ENCODE measurements at regions of chr11 and their contacts with region 1.

Region 1: DNA sequence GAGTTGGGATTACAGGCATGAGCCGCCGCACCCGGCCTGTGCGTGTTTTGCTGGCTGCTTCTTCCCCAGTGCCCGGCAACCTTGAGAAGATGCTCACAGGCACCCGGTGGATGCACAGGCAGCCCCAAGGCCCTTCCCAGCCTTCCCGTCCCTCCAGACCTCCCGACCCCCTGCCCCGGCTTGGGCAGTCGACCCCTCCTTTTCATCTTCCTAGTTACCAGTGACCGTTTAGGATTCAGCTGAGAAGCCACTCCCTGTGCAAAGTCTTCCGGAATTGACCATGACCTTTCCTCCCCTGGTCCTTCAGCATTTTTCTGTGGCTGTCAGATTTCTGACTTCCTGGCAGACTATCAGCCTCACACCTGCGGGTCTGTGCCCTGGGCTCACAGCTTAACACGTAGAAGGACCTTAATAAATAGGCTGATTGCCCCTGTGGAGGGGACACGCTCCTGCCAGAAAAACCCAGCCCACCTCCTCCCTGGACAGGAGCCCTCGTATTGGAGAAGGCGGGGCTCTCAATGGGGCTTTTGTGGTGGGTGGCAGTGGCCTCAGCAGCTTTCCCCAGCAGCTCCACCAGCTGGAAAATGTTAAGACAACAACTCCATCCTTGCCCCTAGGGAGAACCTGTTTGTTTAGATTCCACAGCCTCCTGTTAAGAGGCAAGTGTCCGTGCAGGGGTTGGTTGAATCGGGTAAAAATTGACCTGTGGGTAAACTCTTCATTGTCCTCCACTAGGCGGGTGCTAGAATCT is 10.4 kb upstream of the ANO1 start:
- DNase-seq: peak; percentile 81 to 98
- H3K4me3 ChIP-seq: peak overlapping the region; percentile 50
- H3K27ac ChIP-seq: peak overlapping the region; percentile 86
- H3K4me1 ChIP-seq: peaks cover 91% of the 10 kb centered on the region
- H3K27me3 ChIP-seq: no peaks in the 10 kb centered on the region
- CTCF ChIP-seq: peak; percentile 48; the same call in 1 of the 2 replicates

Region 2: GRCh38 chr11:70048279-70049027 is 19.3 kb before region 1 on chr11:
- CTCF ChIA-PET with region 1: no interaction called
- POLR2A ChIA-PET with region 1: no interaction called
- intact Hi-C with region 1: loop called (anchors 1 kb)
- DNase-seq: peak; percentile 84 to 95
- H3K4me3 ChIP-seq: 0 out of 2 replicates have a peak overlapping the region, but pooled peaks have one; percentile 5
- H3K27ac ChIP-seq: peak overlapping the region; percentile 57
- H3K4me1 ChIP-seq: peaks cover 23% of the 10 kb centered on the region
- H3K27me3 ChIP-seq: no peaks in the 10 kb centered on the region
- CTCF ChIP-seq: peak; percentile 76

Region 3: GRCh38 chr11:70082829-70083228 is 15.1 kb after region 1 on chr11:
- CTCF ChIA-PET with region 1: no interaction called
- POLR2A ChIA-PET with region 1: no interaction called
- intact Hi-C with region 1: loop called (anchors 2 kb)
- DNase-seq: no peak
- H3K4me3 ChIP-seq: no peak overlapping the region
- H3K27ac ChIP-seq: peak overlapping the region; percentile 31
- H3K4me1 ChIP-seq: peaks cover 56% of the 10 kb centered on the region
- H3K27me3 ChIP-seq: no peaks in the 10 kb centered on the region
- CTCF ChIP-seq: peak; percentile 44

Region 4: GRCh38 chr11:70128435-70128906 is 60.7 kb after region 1 on chr11:
- CTCF ChIA-PET with region 1: no interaction called
- POLR2A ChIA-PET with region 1: no interaction called
- intact Hi-C with region 1: loop called (anchors 5 kb)
- DNase-seq: peak; percentile 51 to 78
- H3K4me3 ChIP-seq: no peak overlapping the region
- H3K27ac ChIP-seq: peak overlapping the region; percentile 18; the same call in 1 of the 2 replicates
- H3K4me1 ChIP-seq: peaks cover 22% of the 10 kb centered on the region
- H3K27me3 ChIP-seq: no peaks in the 10 kb centered on the region
- CTCF ChIP-seq: 0 out of 2 replicates have a peak, but pooled peaks have one; percentile 26

Region 5: GRCh38 chr11:70158201-70158600 is 90.4 kb after region 1 on chr11:
- CTCF ChIA-PET with region 1: no interaction called
- POLR2A ChIA-PET with region 1: no interaction called
- intact Hi-C with region 1: loop called (anchors 5 kb)
- DNase-seq: no peak
- H3K4me3 ChIP-seq: no peak overlapping the region
- H3K27ac ChIP-seq: 0 out of 2 replicates have a peak overlapping the region, but pooled peaks have one; percentile 3
- H3K4me1 ChIP-seq: peaks cover 19% of the 10 kb centered on the region
- H3K27me3 ChIP-seq: no peaks in the 10 kb centered on the region
- CTCF ChIP-seq: peak; percentile 52; the same call in 1 of the 2 replicates

Region 6: GRCh38 chr11:70191495-70192140 is 123.9 kb after region 1 on chr11:
- CTCF ChIA-PET with region 1: no interaction called
- POLR2A ChIA-PET with region 1: no interaction called
- intact Hi-C with region 1: loop called (anchors 1 kb)
- DNase-seq: peak; percentile 62 to 90
- H3K4me3 ChIP-seq: no peak overlapping the region
- H3K27ac ChIP-seq: no peak overlapping the region
- H3K4me1 ChIP-seq: peaks cover 13% of the 10 kb centered on the region; the same call in 1 of the 2 replicates
- H3K27me3 ChIP-seq: no peaks in the 10 kb centered on the region
- CTCF ChIP-seq: peak; percentile 93